AG04449 (cell line): ENCODE measurements at regions of chr20 and their contacts with region 1.

Region 1: DNA sequence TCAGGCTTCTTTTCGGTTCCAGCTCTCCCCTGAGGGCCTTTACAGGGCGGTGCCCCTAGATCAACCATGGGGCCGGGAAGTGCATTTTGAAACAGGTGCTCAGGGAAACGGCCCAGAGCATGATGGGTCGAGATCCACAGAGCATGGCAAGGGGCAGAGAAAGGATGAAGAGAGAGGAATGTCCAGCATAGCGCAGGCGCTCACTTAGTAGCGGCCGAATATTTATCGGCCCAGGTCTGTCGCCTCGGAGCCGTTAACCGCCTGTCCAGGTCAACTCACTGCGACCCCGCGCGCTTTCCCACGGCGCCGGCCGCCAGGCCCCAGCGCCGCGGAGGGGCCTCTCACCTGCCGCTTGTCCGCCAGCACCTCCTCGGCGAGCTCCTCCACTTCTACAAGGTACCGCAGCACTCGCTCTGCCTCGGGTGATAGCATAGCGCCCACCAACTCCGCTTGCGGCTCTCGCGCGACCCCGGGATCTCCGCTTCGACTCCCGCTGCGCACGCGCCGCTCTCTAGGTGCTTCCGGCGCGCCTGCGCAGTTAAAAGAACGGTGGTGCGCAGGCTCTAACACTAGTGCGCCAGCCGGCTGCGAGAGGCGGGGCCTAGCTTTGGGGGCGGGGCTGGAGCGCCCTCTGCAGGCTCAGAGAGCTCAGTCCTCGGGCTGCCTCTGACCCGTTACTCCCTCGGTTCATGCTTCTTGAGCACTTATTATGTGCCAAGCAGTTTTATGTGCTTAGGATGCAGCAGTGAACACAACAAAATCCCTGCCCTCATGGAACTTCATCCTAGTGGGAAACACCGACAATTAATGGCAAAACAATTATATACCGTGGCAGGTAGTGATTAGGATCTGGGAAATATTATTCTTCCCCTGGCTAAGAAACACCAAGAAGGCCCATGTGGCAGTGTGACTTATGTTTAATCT is at the start of gene PDRG1:
- DNase-seq: peak; percentile 65
- H3K4me3 ChIP-seq: peak within 1 kb of the TSS; percentile 69
- CTCF ChIP-seq: peak; percentile 96

Region 2: GRCh38 chr20:31731321-31731717 is 220.5 kb before region 1 on chr20:
- CTCF ChIA-PET with region 1: no interaction called
- POLR2A ChIA-PET with region 1: no interaction called
- DNase-seq: no peak
- H3K4me3 ChIP-seq: no peak overlapping the region
- CTCF ChIP-seq: no peak

Region 3: GRCh38 chr20:31822421-31823330 is 129.1 kb before region 1 on chr20:
- CTCF ChIA-PET with region 1: interaction called, 80 read pairs
- POLR2A ChIA-PET with region 1: no interaction called
- DNase-seq: no peak
- H3K4me3 ChIP-seq: no peak overlapping the region
- CTCF ChIP-seq: peak; percentile 98

Region 4: GRCh38 chr20:31835977-31836852 is 115.6 kb before region 1 on chr20:
- CTCF ChIA-PET with region 1: interaction called, 12 read pairs
- POLR2A ChIA-PET with region 1: no interaction called
- DNase-seq: no peak
- H3K4me3 ChIP-seq: no peak overlapping the region
- CTCF ChIP-seq: no peak

Region 5: GRCh38 chr20:31842471-31843157 is 109.2 kb before region 1 on chr20:
- CTCF ChIA-PET with region 1: interaction called, 22 read pairs
- POLR2A ChIA-PET with region 1: no interaction called
- DNase-seq: no peak
- H3K4me3 ChIP-seq: peak overlapping the region; percentile 6; the same call in 1 of the 2 replicates
- CTCF ChIP-seq: no peak

Region 6: DNA sequence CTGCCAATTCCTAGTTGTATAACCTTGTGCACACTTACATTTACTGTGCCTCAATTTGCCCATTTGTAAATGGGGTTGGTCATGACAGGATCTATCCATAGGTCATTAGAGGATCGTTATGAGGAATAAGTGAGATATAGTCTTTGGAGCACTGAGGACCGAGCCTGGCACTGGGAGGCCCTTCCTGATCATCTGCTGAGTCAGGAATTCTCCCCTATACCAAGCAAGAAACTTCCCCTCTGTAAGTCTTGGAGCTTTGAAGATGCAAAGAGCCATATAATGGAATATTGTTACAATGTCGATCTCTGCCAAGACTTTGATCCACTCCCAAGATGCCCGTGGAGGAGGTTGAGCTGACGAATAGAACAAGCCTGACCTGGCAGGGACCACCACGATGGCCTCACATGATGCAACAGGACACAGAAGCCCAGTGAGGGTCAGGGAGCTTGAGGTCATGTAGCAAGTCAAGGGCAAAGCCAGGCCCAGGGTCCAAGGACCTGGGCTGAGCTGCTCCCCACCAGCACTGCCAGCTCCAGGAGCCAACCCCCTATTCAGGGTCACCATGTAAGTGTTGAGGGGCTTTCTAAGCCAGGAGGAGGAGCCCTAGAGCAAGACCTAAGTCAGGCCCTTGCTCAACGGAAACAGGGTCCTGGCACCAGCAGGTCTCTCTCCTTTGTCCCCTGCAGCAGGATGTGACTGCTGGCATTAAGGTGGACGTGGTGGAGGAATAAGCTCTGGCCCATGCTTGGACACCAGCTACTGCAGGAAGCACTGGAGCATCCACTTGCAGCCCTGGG is 16.6 kb before region 1 on chr20:
- CTCF ChIA-PET with region 1: interaction called, 21 read pairs
- POLR2A ChIA-PET with region 1: no interaction called
- DNase-seq: no peak
- H3K4me3 ChIP-seq: no peak overlapping the region
- CTCF ChIP-seq: no peak

Region 7: DNA sequence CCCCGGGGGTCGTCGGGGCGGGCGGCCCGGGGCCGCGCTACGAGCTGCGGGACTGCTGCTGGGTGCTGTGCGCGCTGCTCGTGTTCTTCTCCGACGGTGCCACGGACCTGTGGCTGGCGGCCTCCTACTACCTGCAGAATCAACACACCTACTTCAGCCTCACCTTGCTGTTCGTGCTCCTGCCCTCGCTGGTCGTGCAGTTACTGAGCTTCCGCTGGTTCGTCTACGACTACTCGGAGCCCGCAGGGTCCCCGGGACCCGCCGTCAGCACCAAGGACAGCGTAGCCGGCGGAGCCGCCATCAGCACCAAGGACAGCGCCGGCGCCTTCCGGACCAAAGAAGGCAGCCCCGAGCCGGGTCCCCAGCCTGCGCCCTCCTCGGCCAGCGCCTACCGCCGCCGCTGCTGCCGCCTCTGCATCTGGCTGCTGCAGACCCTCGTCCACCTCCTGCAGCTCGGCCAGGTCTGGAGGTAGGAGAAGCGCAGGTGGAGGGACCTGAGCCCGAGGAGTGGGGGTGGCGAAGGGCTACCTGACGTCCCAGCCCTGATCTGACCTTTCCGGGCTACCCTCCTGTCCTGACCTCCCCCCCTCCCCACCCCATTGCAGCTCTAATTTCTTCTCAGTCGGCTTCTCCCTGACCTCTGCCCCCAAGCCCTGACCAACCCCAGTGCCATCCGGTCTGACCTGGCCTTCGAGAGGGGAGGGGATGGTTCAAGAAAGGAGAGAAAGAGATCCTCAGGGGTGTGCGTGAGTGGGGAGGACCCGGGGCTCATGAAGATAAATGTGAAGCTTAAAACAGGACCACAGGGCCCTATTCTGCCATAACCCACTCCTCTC is 16.7 kb after region 1 on chr20:
- CTCF ChIA-PET with region 1: interaction called, 60 read pairs
- POLR2A ChIA-PET with region 1: no interaction called
- DNase-seq: no peak
- H3K4me3 ChIP-seq: no peak overlapping the region
- CTCF ChIP-seq: no peak